ENCODE measurements at regions of chr17 and their contacts with region 1.

Region 1: DNA sequence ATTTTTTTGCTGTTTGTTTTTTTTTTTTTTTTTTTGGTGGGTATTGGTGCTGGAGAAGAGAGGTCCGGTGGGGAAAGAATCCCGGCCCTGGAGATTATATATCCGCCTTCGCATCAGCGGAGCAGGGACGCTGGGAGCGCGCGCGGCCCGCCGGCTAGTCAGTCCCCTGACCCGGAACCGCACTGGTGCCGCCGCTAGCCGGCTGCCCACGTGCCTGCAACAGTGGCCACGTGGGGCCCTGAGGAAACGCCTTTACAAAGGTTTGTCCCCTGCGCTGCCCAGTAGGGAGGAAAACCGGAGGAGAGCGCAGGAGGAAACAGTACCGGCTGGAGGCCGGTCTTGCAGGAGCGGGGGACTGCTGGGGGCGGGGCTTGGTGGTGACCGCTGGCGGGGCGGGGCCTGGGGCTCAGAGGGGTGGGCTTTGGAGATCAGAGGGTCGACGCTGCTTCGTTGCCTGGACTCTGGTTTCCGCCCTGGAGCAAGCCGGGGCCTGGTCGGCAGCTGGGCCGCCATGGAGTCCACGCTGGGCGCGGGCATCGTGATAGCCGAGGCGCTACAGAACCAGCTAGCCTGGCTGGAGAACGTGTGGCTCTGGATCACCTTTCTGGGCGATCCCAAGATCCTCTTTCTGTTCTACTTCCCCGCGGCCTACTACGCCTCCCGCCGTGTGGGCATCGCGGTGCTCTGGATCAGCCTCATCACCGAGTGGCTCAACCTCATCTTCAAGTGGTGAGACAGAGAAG is at the start of gene G6PC3:
- DNase-seq: peak; percentile 85
- ATAC-seq: peak; percentile 73
- H3K4me3 ChIP-seq: peak within 1 kb of the TSS; percentile 42 to 87 (median 73)
- H3K4me3 Mint-ChIP-seq: peak within 1 kb of the TSS; percentile 93
- H3K27ac ChIP-seq: peak within 1 kb of the TSS; percentile 31 to 65
- H3K27ac Mint-ChIP-seq: peak within 1 kb of the TSS; percentile 82
- H3K4me1 ChIP-seq: peaks cover 22 to 32% of the 10 kb centered on the region in 2 donors
- H3K4me1 Mint-ChIP-seq: peaks cover 36% of the 10 kb centered on the region
- H3K27me3 ChIP-seq: no peaks in the 10 kb centered on the region
- H3K27me3 Mint-ChIP-seq: no peaks in the 10 kb centered on the region
- CTCF ChIP-seq: no peak
- total RNA-seq, gene G6PC3: 26.7 and 28.5 TPM in 2 replicates

Region 2: DNA sequence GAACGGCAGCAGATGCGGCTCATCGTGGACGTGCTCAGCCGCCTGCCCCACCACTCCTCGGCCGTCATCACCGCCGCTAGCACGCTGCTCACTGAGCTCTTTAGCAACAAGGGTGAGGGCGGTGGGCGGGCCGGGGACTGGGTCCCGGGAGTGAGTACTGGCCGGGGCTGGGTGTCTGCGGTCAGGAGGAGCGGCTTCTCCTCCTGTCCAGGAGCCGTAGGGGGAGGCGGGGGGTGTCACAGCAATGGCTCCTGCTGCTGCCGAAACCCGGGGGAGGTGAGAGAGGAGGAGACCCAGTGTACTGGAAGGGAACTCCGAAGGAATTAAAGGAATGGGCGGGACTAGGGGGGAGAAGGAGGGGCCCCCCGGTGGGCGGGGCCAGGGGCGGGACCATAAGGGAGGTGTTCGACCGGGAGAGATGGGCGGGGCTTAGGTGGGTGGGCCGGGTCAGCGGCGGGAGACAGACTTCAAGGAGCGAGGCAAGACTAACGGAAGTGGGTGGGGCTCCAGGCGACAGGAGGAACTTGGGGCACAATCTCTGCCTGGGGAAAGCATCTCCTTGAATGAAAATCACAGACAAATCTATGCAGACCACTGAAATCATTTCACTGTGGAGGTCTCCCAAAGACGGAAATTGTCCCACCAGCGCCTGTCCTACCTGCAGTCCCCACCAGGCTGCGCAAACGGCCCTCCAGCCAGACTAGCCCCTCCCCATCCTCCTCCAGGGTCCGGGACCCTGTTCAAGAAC is 63.9 kb before region 1 on chr17:
- CTCF ChIA-PET with region 1: no interaction called
- POLR2A ChIA-PET with region 1: no interaction called
- intact Hi-C with region 1: loop called (anchors 2 kb)
- DNase-seq: peak; percentile 96
- ATAC-seq: peak; percentile 91
- H3K4me3 ChIP-seq: peak overlapping the region; percentile 53 to 84 (median 77)
- H3K4me3 Mint-ChIP-seq: peak overlapping the region; percentile 95
- H3K27ac ChIP-seq: peak overlapping the region in 1 of 2 donors; percentile 33
- H3K27ac Mint-ChIP-seq: peak overlapping the region; percentile 68
- H3K4me1 ChIP-seq: peaks cover 37 to 42% of the 10 kb centered on the region in 2 donors
- H3K4me1 Mint-ChIP-seq: peaks cover 33% of the 10 kb centered on the region
- H3K27me3 ChIP-seq: peaks cover 0 to 28% (median 11%) of the 10 kb centered on the region in 4 experiments
- H3K27me3 Mint-ChIP-seq: peaks cover 13% of the 10 kb centered on the region
- CTCF ChIP-seq: peak; percentile 69

Region 3: GRCh38 chr17:44014437-44015172 is 56.0 kb before region 1 on chr17 and contains the start of gene TMEM101:
- CTCF ChIA-PET with region 1: interaction called, 4 read pairs
- POLR2A ChIA-PET with region 1: no interaction called
- intact Hi-C with region 1: loop called (anchors 1 kb)
- DNase-seq: peak; percentile 91
- ATAC-seq: peak; percentile 96
- H3K4me3 ChIP-seq: peak within 1 kb of the TSS; percentile 71 to 98 (median 96)
- H3K4me3 Mint-ChIP-seq: peak within 1 kb of the TSS; percentile 100
- H3K27ac ChIP-seq: peak within 1 kb of the TSS; percentile 35 to 45
- H3K27ac Mint-ChIP-seq: peak within 1 kb of the TSS; percentile 94
- H3K4me1 ChIP-seq: peaks cover 9 to 15% of the 10 kb centered on the region in 2 donors
- H3K4me1 Mint-ChIP-seq: peaks cover 14% of the 10 kb centered on the region
- H3K27me3 ChIP-seq: no peaks in the 10 kb centered on the region
- H3K27me3 Mint-ChIP-seq: no peaks in the 10 kb centered on the region
- CTCF ChIP-seq: no peak
- total RNA-seq, gene TMEM101: 25.2 and 25.3 TPM in 2 replicates

Region 4: GRCh38 chr17:44123356-44124117 is 52.9 kb after region 1 on chr17 and contains the start of gene HDAC5:
- CTCF ChIA-PET with region 1: interaction called, 5 read pairs
- POLR2A ChIA-PET with region 1: interaction called, 4 read pairs
- intact Hi-C with region 1: loop called (anchors 1 kb)
- DNase-seq: peak; percentile 95
- ATAC-seq: peak; percentile 97
- H3K4me3 ChIP-seq: peak within 1 kb of the TSS; percentile 71 to 98 (median 85)
- H3K4me3 Mint-ChIP-seq: peak within 1 kb of the TSS; percentile 95
- H3K27ac ChIP-seq: peak within 1 kb of the TSS; percentile 43 to 90
- H3K27ac Mint-ChIP-seq: peak within 1 kb of the TSS; percentile 99
- H3K4me1 ChIP-seq: peaks cover 18 to 26% of the 10 kb centered on the region in 2 donors
- H3K4me1 Mint-ChIP-seq: peaks cover 45% of the 10 kb centered on the region
- H3K27me3 ChIP-seq: no peaks in the 10 kb centered on the region
- H3K27me3 Mint-ChIP-seq: no peaks in the 10 kb centered on the region
- CTCF ChIP-seq: peak; percentile 76
- total RNA-seq, gene HDAC5: 104 and 113 TPM in 2 replicates

Region 5: GRCh38 chr17:44141717-44142285 is 71.2 kb after region 1 on chr17 and contains the start of gene HROB:
- CTCF ChIA-PET with region 1: no interaction called
- POLR2A ChIA-PET with region 1: no interaction called
- intact Hi-C with region 1: loop called (anchors 1 kb)
- DNase-seq: peak; percentile 97
- ATAC-seq: peak; percentile 99
- H3K4me3 ChIP-seq: peak within 1 kb of the TSS; percentile 41 to 85 (median 76)
- H3K4me3 Mint-ChIP-seq: peak within 1 kb of the TSS; percentile 87
- H3K27ac ChIP-seq: peak within 1 kb of the TSS; percentile 57 to 84
- H3K27ac Mint-ChIP-seq: peak within 1 kb of the TSS; percentile 61
- H3K4me1 ChIP-seq: peaks cover 9 to 11% of the 10 kb centered on the region in 2 donors
- H3K4me1 Mint-ChIP-seq: peaks cover 8% of the 10 kb centered on the region
- H3K27me3 ChIP-seq: peaks cover 0 to 20% (median 3%) of the 10 kb centered on the region in 4 experiments
- H3K27me3 Mint-ChIP-seq: peaks cover 14% of the 10 kb centered on the region
- CTCF ChIP-seq: peak; percentile 84
- total RNA-seq, gene HROB: 2.7 and 3.2 TPM in 2 replicates

Measured in B cell (primary cell).